OCI-LY7 (cell line): ENCODE measurements at regions of chr16 and their contacts with region 1.

Region 1: GRCh38 chr16:9047686-9048301 is 43.6 kb upstream of the HAPSTR1 start:
- DNase-seq: no peak
- H3K4me3 ChIP-seq: no peak overlapping the region
- H3K27ac ChIP-seq: no peak overlapping the region
- H3K4me1 ChIP-seq: no peaks in the 10 kb centered on the region
- CTCF ChIP-seq: no peak

Region 2: DNA sequence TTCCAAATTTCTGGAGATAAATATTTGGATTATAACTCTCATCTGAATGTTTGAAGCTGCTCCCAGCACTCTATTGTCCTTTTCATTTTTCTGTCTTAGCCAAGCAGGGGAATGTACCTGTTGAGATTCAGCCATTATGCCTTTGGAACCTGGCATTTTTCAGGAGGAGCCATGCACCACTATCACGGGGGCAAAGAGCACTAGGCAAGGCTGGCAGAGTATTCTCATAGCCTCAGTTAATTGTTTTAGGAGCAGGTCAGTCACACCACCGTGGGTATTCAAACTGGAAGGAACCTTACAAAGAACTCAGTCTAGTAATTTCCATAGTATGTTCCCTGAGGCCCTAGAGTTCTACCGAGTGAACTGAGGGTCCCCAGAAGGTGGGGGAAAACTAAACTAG is 806.4 kb before region 1 on chr16:
- CTCF ChIA-PET with region 1: no interaction called
- POLR2A ChIA-PET with region 1: no interaction called
- intact Hi-C with region 1: no loop called
- DNase-seq: no peak
- H3K4me3 ChIP-seq: no peak overlapping the region
- H3K27ac ChIP-seq: no peak overlapping the region
- H3K4me1 ChIP-seq: no peaks in the 10 kb centered on the region
- CTCF ChIP-seq: no peak

Region 3: GRCh38 chr16:9119795-9120194 is 72.0 kb after region 1 on chr16:
- CTCF ChIA-PET with region 1: no interaction called
- POLR2A ChIA-PET with region 1: no interaction called
- intact Hi-C with region 1: loop called (anchors 10 kb)
- DNase-seq: no peak
- H3K4me3 ChIP-seq: no peak overlapping the region
- H3K27ac ChIP-seq: no peak overlapping the region
- H3K4me1 ChIP-seq: peaks cover 15% of the 10 kb centered on the region
- CTCF ChIP-seq: 0 out of 2 replicates have a peak, but pooled peaks have one; percentile 20